Activated CD4-positive, alpha-beta T cell treated with anti-CD3 and anti-CD28 coated beads, Interleukin-2, amount 10 ng/mL, durations not matched to agents 24 days and 14 days (primary cell): ENCODE measurements at regions of chr2 and their contacts with region 1.

Region 1: GRCh38 chr2:216683846-216684507 is 11.4 kb downstream of the IGFBP5 start:
- DNase-seq: no peak
- H3K4me3 Mint-ChIP-seq: no peak overlapping the region
- H3K27ac Mint-ChIP-seq: no peak overlapping the region
- H3K4me1 Mint-ChIP-seq: peaks cover 9% of the 10 kb centered on the region
- H3K27me3 Mint-ChIP-seq: peaks cover 25% of the 10 kb centered on the region

Region 2: DNA sequence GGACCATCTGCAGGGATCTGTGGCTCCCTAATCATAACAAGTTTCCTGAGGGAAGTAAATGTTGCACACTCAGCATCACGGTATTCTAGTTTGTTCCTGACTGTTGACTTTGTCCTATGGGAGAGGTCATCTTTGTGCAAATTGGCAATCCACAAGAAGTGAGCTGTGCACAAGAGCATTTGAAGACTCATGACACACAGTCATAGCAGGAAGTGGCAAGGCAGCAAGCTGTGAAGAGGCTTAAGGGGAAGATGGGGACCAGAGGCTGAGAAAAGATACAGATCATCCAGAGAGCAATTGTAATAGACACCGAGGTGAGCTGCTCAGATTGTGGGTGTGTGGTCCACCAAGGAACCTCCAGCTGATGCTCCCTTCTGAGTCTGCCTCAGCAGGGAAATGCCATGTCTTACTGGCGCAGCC is 173.2 kb after region 1 on chr2:
- intact Hi-C with region 1: no loop called
- DNase-seq: peak; percentile 79
- H3K4me3 Mint-ChIP-seq: no peak overlapping the region
- H3K27ac Mint-ChIP-seq: peak overlapping the region; percentile 29
- H3K4me1 Mint-ChIP-seq: peaks cover 44% of the 10 kb centered on the region
- H3K27me3 Mint-ChIP-seq: peaks cover 2% of the 10 kb centered on the region

Region 3: DNA sequence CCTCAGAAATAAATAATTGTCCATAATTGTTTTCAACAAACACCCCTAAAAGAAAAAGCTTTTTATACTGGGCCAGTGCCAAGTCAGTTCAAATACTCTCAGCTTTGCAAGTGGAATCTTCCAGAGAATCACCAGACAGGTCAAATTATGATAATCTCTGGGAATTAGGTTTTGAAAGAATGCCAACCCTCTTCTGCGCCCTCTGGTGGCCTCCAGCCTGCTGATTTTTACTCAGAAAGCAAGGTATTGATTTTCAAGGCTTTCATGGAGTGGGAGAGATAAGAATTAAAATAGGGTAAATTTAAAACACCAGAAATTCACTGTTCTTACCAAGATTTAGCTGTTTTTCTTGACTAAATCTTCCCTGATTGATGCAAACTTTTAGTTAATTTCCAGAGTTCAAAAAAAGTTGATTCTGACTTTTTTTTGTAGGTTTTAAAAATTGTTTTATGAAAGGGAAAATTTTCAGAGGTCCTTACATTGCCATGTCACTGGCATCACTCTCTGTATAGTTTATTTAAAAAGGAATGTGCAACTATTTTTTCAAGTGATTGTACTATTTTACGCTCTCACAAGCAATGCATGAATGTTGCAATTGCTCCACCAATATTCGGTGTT is 458.8 kb after region 1 on chr2:
- intact Hi-C with region 1: loop called (anchors 5 kb)
- DNase-seq: peak; percentile 74
- H3K4me3 Mint-ChIP-seq: no peak overlapping the region
- H3K27ac Mint-ChIP-seq: no peak overlapping the region
- H3K4me1 Mint-ChIP-seq: no peaks in the 10 kb centered on the region
- H3K27me3 Mint-ChIP-seq: peaks cover 13% of the 10 kb centered on the region